ENCODE measurements at regions of chr15 and their contacts with region 1.

Region 1: GRCh38 chr15:38440353-38441129 is 13.4 kb upstream of the FAM98B start:
- DNase-seq: peak; percentile 67
- H3K4me3 ChIP-seq: no peak overlapping the region
- H3K27ac ChIP-seq: no peak overlapping the region
- H3K4me1 ChIP-seq: no peaks in the 10 kb centered on the region
- H3K27me3 ChIP-seq: peaks cover 26 to 60% of the 10 kb centered on the region in 2 experiments
- CTCF ChIP-seq: peak; percentile 85 to 86
- POLR2A ChIP-seq: no peak

Region 2: GRCh38 chr15:38378161-38378560 is 62.4 kb before region 1 on chr15:
- CTCF ChIA-PET with region 1: interaction called, 11 read pairs
- POLR2A ChIA-PET with region 1: no interaction called
- dilution Hi-C with region 1: no loop called
- intact Hi-C with region 1: no loop called
- DNase-seq: peak; percentile 85
- H3K4me3 ChIP-seq: no peak overlapping the region
- H3K27ac ChIP-seq: no peak overlapping the region
- H3K4me1 ChIP-seq: peaks cover 19% of the 10 kb centered on the region
- H3K27me3 ChIP-seq: peaks cover 0 to 4% of the 10 kb centered on the region in 2 experiments
- CTCF ChIP-seq: no peak
- POLR2A ChIP-seq: no peak

Region 3: GRCh38 chr15:38427380-38427779 is 13.2 kb before region 1 on chr15:
- CTCF ChIA-PET with region 1: interaction called, 32 read pairs
- POLR2A ChIA-PET with region 1: no interaction called
- dilution Hi-C with region 1: no loop called
- intact Hi-C with region 1: no loop called
- DNase-seq: no peak
- H3K4me3 ChIP-seq: no peak overlapping the region
- H3K27ac ChIP-seq: no peak overlapping the region
- H3K4me1 ChIP-seq: no peaks in the 10 kb centered on the region
- H3K27me3 ChIP-seq: peaks cover 20 to 67% of the 10 kb centered on the region in 2 experiments
- CTCF ChIP-seq: no peak
- POLR2A ChIP-seq: no peak

Region 4: DNA sequence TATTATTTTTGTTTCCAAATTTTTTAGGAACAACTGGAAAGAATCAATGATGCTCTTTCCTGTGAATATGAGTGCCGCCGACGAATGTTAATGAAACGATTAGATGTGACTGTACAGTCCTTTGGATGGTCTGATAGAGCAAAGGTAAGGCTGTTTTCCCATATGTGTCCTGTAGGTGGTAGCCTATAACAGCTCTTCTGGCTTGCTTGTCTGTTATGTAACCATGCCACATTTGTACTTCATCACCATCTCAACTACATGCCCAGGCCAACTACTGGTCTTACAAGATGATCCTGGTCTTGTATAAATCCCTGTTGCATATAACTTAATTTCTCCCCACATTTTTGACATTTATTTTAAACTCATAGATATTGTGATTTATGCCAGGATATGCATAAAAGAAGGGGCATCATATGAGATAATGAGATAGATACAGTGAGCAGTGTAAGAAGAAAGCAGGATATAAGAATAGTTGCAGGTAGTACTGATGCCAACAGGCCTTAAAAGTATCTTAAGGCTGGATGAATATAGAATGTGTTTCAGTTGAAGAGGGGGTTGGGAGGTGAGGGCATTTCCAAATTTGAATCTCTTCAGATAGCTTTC is 33.7 kb after region 1 on chr15:
- CTCF ChIA-PET with region 1: interaction called, 17 read pairs
- POLR2A ChIA-PET with region 1: no interaction called
- dilution Hi-C with region 1: no loop called
- intact Hi-C with region 1: no loop called
- DNase-seq: peak; percentile 72
- H3K4me3 ChIP-seq: no peak overlapping the region
- H3K27ac ChIP-seq: no peak overlapping the region
- H3K4me1 ChIP-seq: peaks cover 4% of the 10 kb centered on the region
- H3K27me3 ChIP-seq: no peaks in the 10 kb centered on the region
- CTCF ChIP-seq: peak; percentile 44 to 65
- POLR2A ChIP-seq: no peak

Region 5: GRCh38 chr15:38563723-38564519 is 123.4 kb after region 1 on chr15:
- CTCF ChIA-PET with region 1: interaction called, 26 read pairs
- POLR2A ChIA-PET with region 1: no interaction called
- dilution Hi-C with region 1: no loop called
- intact Hi-C with region 1: loop called (anchors 1 kb)
- DNase-seq: peak; percentile 48
- H3K4me3 ChIP-seq: peak overlapping the region; percentile 15 to 61 (median 44)
- H3K27ac ChIP-seq: no peak overlapping the region
- H3K4me1 ChIP-seq: no peaks in the 10 kb centered on the region
- H3K27me3 ChIP-seq: peaks cover 34 to 54% of the 10 kb centered on the region in 2 experiments
- CTCF ChIP-seq: peak; percentile 83 to 95
- POLR2A ChIP-seq: no peak

Region 6: DNA sequence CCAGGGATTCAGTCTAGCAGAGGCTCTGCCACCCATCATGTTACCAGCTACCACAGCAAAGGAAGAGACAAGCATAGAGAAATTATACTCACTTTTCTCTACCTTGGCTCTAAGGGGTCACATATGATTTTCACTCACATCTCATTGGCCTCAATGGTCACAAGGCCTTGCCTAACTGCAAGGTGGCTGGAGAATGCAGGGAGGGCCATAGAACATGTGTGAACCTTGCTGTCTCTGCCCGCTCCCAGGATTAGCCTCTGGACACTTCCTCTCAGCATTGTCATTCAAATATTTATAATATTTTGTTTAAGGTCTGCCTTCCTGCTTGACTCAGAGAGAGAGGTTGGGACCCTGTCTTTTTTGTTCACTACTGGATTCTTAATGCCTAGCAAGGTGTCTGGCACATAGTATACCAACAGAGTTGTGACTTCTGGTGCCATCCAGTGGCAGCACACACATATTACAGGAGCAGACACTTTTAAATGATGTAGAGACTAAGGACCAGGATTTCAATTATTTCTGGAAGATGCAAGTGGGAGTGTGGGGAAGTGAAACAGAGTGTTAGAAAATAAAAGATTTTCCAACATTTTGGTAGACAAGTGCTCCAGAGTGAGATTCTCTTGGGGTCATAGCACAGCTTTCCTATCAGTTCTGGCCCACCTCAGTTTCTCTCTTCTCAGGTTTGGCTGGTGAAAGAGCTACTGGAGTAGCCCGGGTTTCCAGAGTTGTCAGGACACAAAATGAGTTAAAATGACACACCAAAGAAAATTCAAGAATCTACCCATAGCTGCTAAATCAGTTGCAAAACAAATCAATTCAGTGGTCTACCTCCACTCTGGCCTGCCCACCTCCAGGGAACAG is 243.1 kb after region 1 on chr15:
- CTCF ChIA-PET with region 1: interaction called, 149 read pairs
- POLR2A ChIA-PET with region 1: no interaction called
- dilution Hi-C with region 1: no loop called
- intact Hi-C with region 1: loop called (anchors 1 kb)
- DNase-seq: peak; percentile 59
- H3K4me3 ChIP-seq: no peak overlapping the region
- H3K27ac ChIP-seq: no peak overlapping the region
- H3K4me1 ChIP-seq: no peaks in the 10 kb centered on the region
- H3K27me3 ChIP-seq: peaks cover 17 to 20% of the 10 kb centered on the region in 2 experiments
- CTCF ChIP-seq: peak; percentile 63 to 64
- POLR2A ChIP-seq: no peak

Region 7: DNA sequence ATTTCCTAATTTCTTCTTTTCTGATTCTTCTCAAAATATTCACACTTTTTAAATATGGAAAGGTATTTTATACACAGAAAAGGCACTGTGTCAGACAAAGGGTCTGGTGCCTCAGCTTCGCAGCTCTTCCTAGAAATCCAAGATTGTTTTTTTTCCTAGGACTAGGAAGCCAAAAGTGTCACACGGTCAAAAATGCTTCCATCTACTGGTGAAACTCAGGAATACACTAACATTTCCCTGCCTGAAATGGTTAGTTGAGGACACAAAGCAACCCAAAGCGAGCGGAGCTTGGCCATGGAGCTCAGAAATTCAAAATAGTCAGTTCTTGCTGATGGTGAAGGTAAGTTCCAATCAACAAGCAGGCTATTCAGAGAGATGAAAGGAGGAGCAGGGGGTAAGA is 550.6 kb after region 1 on chr15:
- CTCF ChIA-PET with region 1: no interaction called
- POLR2A ChIA-PET with region 1: no interaction called
- dilution Hi-C with region 1: no loop called
- intact Hi-C with region 1: no loop called
- DNase-seq: peak; percentile 83
- H3K4me3 ChIP-seq: no peak overlapping the region
- H3K27ac ChIP-seq: peak overlapping the region; percentile 2
- H3K4me1 ChIP-seq: peaks cover 34% of the 10 kb centered on the region
- H3K27me3 ChIP-seq: no peaks in the 10 kb centered on the region
- CTCF ChIP-seq: peak; percentile 50 to 51
- POLR2A ChIP-seq: no peak